Ascending aorta (tissue), 2 donors: ENCODE measurements at regions of chr20 and their contacts with region 1.

Region 1: GRCh38 chr20:62010551-62011402 is 54.9 kb downstream of the TAF4 start:
- DNase-seq: no peak
- H3K4me3 ChIP-seq: no peak overlapping the region
- H3K27ac ChIP-seq: no peak overlapping the region
- H3K4me1 ChIP-seq: no peaks in the 10 kb centered on the region
- H3K27me3 ChIP-seq: no peaks in the 10 kb centered on the region
- CTCF ChIP-seq: peak; percentile 40 to 77 (median 72)

Region 2: GRCh38 chr20:61976644-61977490 is 33.9 kb before region 1 on chr20:
- intact Hi-C with region 1: no loop called
- DNase-seq: no peak
- H3K4me3 ChIP-seq: no peak overlapping the region
- H3K27ac ChIP-seq: no peak overlapping the region
- H3K4me1 ChIP-seq: no peaks in the 10 kb centered on the region
- H3K27me3 ChIP-seq: no peaks in the 10 kb centered on the region
- CTCF ChIP-seq: no peak

Region 3: GRCh38 chr20:62136283-62137091 is 125.7 kb after region 1 on chr20:
- intact Hi-C with region 1: loop called (anchors 2 kb)
- DNase-seq: peak in 1 of 2 donors; percentile 84
- H3K4me3 ChIP-seq: no peak overlapping the region
- H3K27ac ChIP-seq: peak overlapping the region in 1 of 2 donors; percentile 33
- H3K4me1 ChIP-seq: peaks cover under 1 to 13% of the 10 kb centered on the region in 2 donors
- H3K27me3 ChIP-seq: no peaks in the 10 kb centered on the region
- CTCF ChIP-seq: peak; percentile 53 to 77 (median 65)

Region 4: DNA sequence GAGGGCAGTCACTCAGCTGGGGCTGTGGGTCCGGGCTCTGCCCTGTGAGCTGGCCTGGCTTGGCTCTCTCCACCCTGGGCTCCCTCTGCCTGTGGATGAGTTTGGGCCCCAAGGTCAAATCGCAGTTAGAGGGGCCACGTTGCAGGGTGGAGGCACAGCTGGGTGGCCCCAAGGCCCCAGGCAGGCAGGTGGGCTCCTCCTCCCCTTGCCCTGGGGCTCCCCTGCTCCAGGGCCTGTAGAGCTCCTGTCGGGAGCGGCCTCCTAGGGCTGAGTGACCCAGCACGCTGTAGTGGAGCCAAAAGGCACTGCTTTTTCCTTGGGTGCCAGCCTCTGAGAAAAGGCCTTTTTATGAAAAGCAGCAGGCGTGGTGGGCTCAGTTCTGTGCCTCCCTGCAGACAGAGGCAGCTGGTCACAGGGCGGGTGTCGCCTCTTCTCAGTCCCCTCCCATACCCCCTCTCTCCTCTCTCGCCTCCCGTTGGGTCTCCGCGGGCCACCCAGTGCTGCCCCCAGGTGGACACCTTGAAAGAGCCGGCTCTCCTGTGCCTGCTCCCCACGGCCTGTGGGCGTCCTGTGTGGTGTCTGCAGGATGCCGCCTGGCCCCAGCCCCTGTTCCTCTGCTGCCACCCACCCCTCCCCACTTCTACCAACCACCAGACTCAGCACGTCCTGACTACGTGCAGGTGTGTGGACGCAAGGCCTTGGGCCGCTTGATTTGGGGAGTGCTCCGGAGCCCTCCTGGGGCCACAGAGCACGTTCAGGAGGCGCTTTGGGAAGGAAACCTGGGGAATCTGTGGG is 146.0 kb after region 1 on chr20:
- intact Hi-C with region 1: loop called (anchors 2 kb)
- DNase-seq: no peak
- H3K4me3 ChIP-seq: no peak overlapping the region
- H3K27ac ChIP-seq: no peak overlapping the region
- H3K4me1 ChIP-seq: peaks cover 0 to 2% of the 10 kb centered on the region in 2 donors
- H3K27me3 ChIP-seq: no peaks in the 10 kb centered on the region
- CTCF ChIP-seq: peak; percentile 30 to 64 (median 61)

Region 5: DNA sequence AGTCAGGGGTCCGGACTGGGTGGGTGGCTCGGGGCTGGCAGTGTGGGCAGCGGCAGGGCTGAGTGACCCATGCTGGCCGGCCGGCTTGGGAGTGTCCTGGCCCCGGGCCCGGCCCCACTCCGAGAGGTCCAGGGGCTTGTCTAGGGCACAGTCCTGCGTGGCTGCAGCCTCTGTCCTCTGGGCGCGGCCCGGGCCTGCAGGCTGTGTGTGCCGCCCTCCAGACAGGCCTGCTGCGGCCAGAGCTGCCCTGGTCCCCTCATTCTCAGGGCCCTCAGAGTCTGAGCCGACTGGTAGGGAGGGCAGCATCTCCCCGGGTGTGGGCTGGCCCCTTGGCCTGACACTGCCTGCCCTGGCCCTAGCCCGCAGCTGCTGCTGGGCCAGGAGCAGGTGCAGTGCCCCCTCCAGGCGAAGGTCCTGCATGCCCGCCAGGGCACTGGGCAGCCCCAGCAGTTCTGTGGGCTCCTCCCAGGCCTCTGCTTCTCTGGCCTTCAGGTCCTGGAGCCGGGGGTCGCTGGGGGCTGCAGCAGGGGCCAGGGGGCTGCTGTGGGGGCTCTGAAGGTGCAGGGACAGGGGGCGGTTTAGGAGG is 403.2 kb after region 1 on chr20:
- intact Hi-C with region 1: no loop called
- DNase-seq: no peak
- H3K4me3 ChIP-seq: no peak overlapping the region
- H3K27ac ChIP-seq: no peak overlapping the region
- H3K4me1 ChIP-seq: peaks cover 0 to 4% of the 10 kb centered on the region in 2 donors
- H3K27me3 ChIP-seq: no peaks in the 10 kb centered on the region
- CTCF ChIP-seq: no peak